ENCODE measurements at regions of chr18 and their contacts with region 1.

Region 1: DNA sequence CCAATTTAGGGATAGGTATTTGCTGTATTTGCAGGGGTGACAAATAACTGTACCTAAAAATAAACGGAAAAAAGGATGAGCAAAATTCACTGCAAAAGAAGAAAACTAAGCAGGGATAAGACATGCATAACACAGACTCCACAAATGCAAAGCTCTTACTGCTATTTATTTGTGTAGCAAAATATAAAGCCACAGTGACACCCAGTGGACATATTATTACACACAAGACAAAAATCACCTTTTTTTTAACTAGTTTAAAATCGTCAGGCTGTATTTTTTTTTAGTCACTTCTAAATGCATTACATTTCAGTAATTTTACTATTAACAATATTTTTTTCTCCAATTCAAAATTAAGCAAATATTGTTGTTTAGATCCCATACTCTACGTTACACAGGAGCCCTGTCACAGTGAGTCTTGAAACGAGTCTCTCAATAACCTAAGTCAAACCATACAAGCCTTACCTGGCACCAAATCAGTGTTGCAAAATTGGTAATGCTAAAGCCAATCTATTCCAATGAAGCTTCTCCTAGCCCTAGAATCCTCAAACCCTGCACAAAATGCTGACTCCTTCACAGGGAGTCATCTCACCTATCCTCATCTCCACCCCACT is 23.7 kb downstream of the METTL4 start:
- DNase-seq: peak; percentile 55
- H3K4me3 Mint-ChIP-seq: no peak overlapping the region
- H3K27ac Mint-ChIP-seq: peak overlapping the region; percentile 23
- H3K4me1 Mint-ChIP-seq: no peaks in the 10 kb centered on the region
- H3K27me3 Mint-ChIP-seq: no peaks in the 10 kb centered on the region
- CTCF ChIP-seq: peak; percentile 58

Region 2: DNA sequence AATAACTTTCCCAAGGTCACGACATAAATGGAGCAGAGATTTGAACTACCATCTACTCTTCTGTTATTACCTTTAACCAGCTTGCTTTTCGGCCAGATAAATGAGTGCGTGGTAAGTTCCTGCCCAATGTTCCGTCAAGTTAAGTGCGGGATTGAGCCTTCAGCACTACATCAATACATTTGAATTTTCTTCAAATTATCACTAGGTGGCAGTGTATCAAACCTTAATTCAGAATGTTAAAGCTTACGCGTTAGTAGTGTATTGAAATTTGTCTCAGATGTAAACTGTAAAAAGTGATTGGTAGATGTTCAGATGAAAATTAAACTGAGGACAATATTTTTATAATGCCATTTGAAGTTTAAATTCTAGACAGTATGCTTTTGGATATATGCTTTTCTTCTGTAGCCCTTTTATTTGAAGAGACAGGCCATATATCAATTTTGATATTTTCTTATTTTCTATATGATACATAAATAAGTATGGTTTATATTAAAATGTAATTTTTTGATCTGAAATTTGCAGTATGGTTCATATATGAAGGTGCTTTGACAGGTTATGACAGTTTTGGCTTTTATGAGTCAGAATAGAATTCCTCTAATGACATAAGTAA is 961.6 kb before region 1 on chr18:
- CTCF ChIA-PET with region 1: interaction called, 17 read pairs
- POLR2A ChIA-PET with region 1: no interaction called
- intact Hi-C with region 1: loop called (anchors 2 kb)
- DNase-seq: peak; percentile 45
- H3K4me3 Mint-ChIP-seq: no peak overlapping the region
- H3K27ac Mint-ChIP-seq: no peak overlapping the region
- H3K4me1 Mint-ChIP-seq: peaks cover 5% of the 10 kb centered on the region
- H3K27me3 Mint-ChIP-seq: no peaks in the 10 kb centered on the region
- CTCF ChIP-seq: peak; percentile 39

Region 3: DNA sequence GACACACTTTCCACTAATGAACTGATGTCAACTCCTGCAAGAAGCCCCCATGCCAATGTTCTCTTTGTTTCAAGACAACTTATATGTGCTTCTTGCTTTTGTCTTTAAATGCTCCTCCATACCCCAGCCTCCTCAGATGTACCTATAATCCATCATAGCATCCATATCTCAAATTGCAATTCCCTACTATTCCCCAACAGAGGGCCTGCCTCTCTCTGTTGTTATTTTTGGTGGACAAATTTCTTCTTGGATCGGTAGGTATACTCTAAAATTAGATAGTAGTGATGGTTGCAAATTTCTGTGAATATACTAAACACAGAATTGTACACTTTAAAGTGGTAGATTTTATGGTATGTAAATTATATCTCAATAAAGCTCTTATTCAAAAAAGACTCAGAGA is 796.3 kb before region 1 on chr18:
- CTCF ChIA-PET with region 1: no interaction called
- POLR2A ChIA-PET with region 1: no interaction called
- intact Hi-C with region 1: loop called (anchors 10 kb)
- DNase-seq: peak; percentile 17
- H3K4me3 Mint-ChIP-seq: no peak overlapping the region
- H3K27ac Mint-ChIP-seq: no peak overlapping the region
- H3K4me1 Mint-ChIP-seq: peaks cover 16% of the 10 kb centered on the region
- H3K27me3 Mint-ChIP-seq: no peaks in the 10 kb centered on the region
- CTCF ChIP-seq: no peak

Region 4: DNA sequence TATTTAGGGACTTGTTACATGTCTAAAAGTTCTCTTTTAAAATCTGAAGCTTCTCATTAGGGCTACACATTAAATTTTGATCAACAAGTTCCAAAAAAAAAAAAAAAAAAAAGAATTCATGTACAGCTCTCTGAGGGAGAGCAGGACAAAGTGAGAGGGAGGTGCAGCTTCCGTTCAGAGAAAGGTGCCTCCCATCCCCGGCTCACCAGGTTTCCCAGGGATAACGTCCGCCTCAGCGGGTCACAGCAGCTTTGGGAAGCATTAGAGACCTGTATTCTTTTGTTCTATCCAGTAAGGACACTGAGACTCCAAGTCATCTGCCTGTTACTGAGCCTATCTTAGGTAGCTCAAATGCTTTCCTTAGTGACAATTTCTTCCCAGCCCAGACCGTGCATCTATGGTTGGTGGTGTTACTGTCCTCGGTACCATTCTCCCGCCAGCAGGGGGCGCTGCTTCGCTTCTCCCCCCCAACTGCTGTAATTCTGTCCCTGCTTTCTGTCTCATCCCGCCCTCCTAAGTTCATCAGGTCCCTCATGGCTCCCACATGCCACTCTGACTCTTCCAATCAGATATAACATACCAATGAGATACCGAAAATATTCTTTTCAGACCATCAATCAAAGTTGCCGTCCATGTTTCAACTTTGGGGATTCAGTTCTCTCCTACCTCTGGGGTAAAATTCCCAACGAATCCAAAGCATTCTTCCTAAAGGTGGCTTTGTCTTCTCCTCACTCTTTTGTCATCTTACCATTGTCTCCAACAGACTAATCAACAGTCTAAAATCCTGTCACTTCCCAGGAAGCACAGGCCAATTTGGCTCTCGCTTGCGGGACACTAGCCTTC is 442.7 kb before region 1 on chr18:
- CTCF ChIA-PET with region 1: interaction called, 33 read pairs
- POLR2A ChIA-PET with region 1: no interaction called
- intact Hi-C with region 1: loop called (anchors 1 kb)
- DNase-seq: peak; percentile 68
- H3K4me3 Mint-ChIP-seq: no peak overlapping the region
- H3K27ac Mint-ChIP-seq: no peak overlapping the region
- H3K4me1 Mint-ChIP-seq: peaks cover 6% of the 10 kb centered on the region
- H3K27me3 Mint-ChIP-seq: no peaks in the 10 kb centered on the region
- CTCF ChIP-seq: peak; percentile 81

Region 5: DNA sequence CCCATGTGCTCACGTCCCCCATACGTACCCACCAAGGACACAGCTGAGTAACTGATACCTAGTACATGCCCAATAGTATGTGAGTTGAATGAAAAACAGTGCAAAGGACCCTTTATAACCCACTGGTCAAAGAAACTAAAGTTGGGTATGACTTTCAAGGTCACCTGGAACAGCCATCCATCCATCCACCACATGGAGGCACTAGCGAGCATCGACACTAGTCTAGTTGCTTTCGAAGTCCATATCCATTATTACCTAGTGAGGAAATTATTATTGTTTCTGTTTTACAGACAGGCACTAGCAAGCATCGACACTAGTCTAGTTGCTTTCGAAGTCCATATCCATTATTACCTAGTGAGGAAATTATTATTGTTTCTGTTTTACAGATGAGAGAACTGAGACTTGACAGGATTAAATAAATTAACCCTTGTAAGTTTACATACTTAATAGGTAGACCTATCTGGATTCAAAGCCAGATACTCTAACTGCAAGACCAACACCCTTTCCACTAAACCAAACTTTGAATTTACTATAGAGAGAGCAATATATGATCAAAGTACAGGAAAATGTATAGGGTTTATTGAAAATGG is 209.9 kb before region 1 on chr18:
- CTCF ChIA-PET with region 1: interaction called, 5 read pairs
- POLR2A ChIA-PET with region 1: no interaction called
- intact Hi-C with region 1: loop called (anchors 1 kb)
- DNase-seq: peak; percentile 57
- H3K4me3 Mint-ChIP-seq: no peak overlapping the region
- H3K27ac Mint-ChIP-seq: no peak overlapping the region
- H3K4me1 Mint-ChIP-seq: peaks cover 7% of the 10 kb centered on the region
- H3K27me3 Mint-ChIP-seq: no peaks in the 10 kb centered on the region
- CTCF ChIP-seq: peak; percentile 57

Region 6: GRCh38 chr18:2451556-2451955 is 96.0 kb before region 1 on chr18:
- CTCF ChIA-PET with region 1: no interaction called
- POLR2A ChIA-PET with region 1: no interaction called
- intact Hi-C with region 1: no loop called
- DNase-seq: no peak
- H3K4me3 Mint-ChIP-seq: no peak overlapping the region
- H3K27ac Mint-ChIP-seq: no peak overlapping the region
- H3K4me1 Mint-ChIP-seq: peaks cover 5% of the 10 kb centered on the region
- H3K27me3 Mint-ChIP-seq: no peaks in the 10 kb centered on the region
- CTCF ChIP-seq: no peak

Region 7: DNA sequence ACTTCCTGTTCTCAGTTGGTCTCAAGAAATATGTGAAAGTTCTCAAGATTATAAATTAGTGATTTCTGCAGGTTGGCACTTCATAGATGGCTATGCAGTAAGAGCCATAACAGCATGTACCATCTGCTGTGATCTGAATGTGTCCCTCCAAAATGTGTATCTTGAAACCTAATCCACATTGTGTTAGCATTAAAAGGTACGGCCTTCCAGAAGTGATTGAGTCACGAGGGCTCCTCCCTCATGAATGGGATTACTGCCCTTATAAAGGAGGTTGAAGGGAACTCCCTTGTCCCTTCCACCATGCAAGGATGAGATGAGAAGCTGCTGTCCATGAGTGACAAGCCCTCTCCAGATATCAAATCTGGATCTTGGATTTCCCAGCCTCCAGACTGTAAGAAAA is 21.3 kb before region 1 on chr18:
- CTCF ChIA-PET with region 1: no interaction called
- POLR2A ChIA-PET with region 1: no interaction called
- intact Hi-C with region 1: no loop called
- DNase-seq: no peak
- H3K4me3 Mint-ChIP-seq: no peak overlapping the region
- H3K27ac Mint-ChIP-seq: no peak overlapping the region
- H3K4me1 Mint-ChIP-seq: peaks cover 5% of the 10 kb centered on the region
- H3K27me3 Mint-ChIP-seq: no peaks in the 10 kb centered on the region
- CTCF ChIP-seq: no peak